ENCODE measurements at regions of chr19 and their contacts with region 1.

Region 1: GRCh38 chr19:18328340-18329034 is 5.6 kb upstream of the LSM4 start:
- DNase-seq: peak; percentile 97
- ATAC-seq: peak; percentile 97
- H3K4me3 ChIP-seq: peak overlapping the region; percentile 50
- H3K27ac ChIP-seq: no peak overlapping the region
- H3K4me1 ChIP-seq: peaks cover 10% of the 10 kb centered on the region
- H3K27me3 ChIP-seq: no peaks in the 10 kb centered on the region
- CTCF ChIP-seq: peak; percentile 89

Region 2: GRCh38 chr19:18239303-18239702 is 89.2 kb before region 1 on chr19:
- CTCF ChIA-PET with region 1: no interaction called
- POLR2A ChIA-PET with region 1: no interaction called
- intact Hi-C with region 1: no loop called
- DNase-seq: no peak
- ATAC-seq: no peak
- H3K4me3 ChIP-seq: no peak overlapping the region
- H3K27ac ChIP-seq: no peak overlapping the region
- H3K4me1 ChIP-seq: no peaks in the 10 kb centered on the region
- H3K27me3 ChIP-seq: no peaks in the 10 kb centered on the region
- CTCF ChIP-seq: no peak

Region 3: GRCh38 chr19:18274781-18275356 is 53.6 kb before region 1 on chr19:
- CTCF ChIA-PET with region 1: interaction called, 64 read pairs
- POLR2A ChIA-PET with region 1: interaction called, 9 read pairs
- intact Hi-C with region 1: loop called (anchors 1 kb)
- DNase-seq: peak; percentile 89
- ATAC-seq: peak; percentile 85
- H3K4me3 ChIP-seq: no peak overlapping the region
- H3K27ac ChIP-seq: peak overlapping the region; percentile 71
- H3K4me1 ChIP-seq: peaks cover 23% of the 10 kb centered on the region
- H3K27me3 ChIP-seq: no peaks in the 10 kb centered on the region
- CTCF ChIP-seq: no peak

Region 4: GRCh38 chr19:18291590-18292461 is 36.7 kb before region 1 on chr19:
- CTCF ChIA-PET with region 1: interaction called, 10 read pairs
- POLR2A ChIA-PET with region 1: no interaction called
- intact Hi-C with region 1: no loop called
- DNase-seq: peak; percentile 35
- ATAC-seq: peak; percentile 70
- H3K4me3 ChIP-seq: peak overlapping the region; percentile 70
- H3K27ac ChIP-seq: peak overlapping the region; percentile 23; the same call in 1 of the 2 replicates
- H3K4me1 ChIP-seq: peaks cover 17% of the 10 kb centered on the region
- H3K27me3 ChIP-seq: no peaks in the 10 kb centered on the region
- CTCF ChIP-seq: no peak

Region 5: GRCh38 chr19:18340190-18340989 is 11.9 kb after region 1 on chr19 and contains the start of gene PGPEP1:
- CTCF ChIA-PET with region 1: interaction called, 12 read pairs
- POLR2A ChIA-PET with region 1: interaction called, 14 read pairs
- intact Hi-C with region 1: no loop called
- DNase-seq: peak; percentile 67
- ATAC-seq: peak; percentile 76
- H3K4me3 ChIP-seq: peak within 1 kb of the TSS; percentile 85
- H3K27ac ChIP-seq: no peak within 1 kb of the TSS
- H3K4me1 ChIP-seq: peaks cover 24% of the 10 kb centered on the region
- H3K27me3 ChIP-seq: no peaks in the 10 kb centered on the region
- CTCF ChIP-seq: no peak
- total RNA-seq, gene PGPEP1: 9.6 and 11.4 TPM in 2 replicates

Measured in PC-3 (cell line).